Activated T-helper 1 cell treated with anti-CD3 and anti-CD28 coated beads, Interleukin-12 subunit alpha, Interleukin-12 subunit beta, Interleukin-2, Interleukin-4 antibody, amounts not matched to agents 30 ng/mL and 10 ng/mL and 1 ng/mL, durations not matched to agents 14 hours and 24 hours and 36 hours (primary cell): ENCODE measurements at regions of chrX and their contacts with region 1.

Region 1: DNA sequence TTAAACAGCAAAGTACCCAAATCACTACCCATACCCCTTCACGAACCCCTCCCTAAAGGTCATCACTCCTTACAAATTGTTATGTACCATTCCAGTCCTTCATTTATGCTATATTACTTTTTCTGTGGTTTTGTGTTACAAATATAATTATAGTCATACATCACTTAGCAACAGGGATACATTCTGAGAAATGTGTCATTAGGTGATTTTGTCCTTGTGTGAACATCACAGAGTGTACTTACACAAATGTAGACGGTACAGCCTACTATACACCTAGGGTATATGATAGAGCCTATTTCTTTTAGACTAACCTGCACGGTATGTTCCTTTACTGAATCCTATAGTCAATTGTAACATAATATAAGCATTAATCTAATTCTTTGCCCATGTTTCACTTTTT is 61.9 kb downstream of the ASB9 start:
- DNase-seq: no peak
- H3K4me3 Mint-ChIP-seq: no peak overlapping the region
- H3K27ac Mint-ChIP-seq: no peak overlapping the region
- H3K4me1 Mint-ChIP-seq: peaks cover 24% of the 10 kb centered on the region
- H3K27me3 Mint-ChIP-seq: peaks cover 4% of the 10 kb centered on the region

Region 2: GRCh38 chrX:15236146-15236545 is 28.2 kb after region 1 on chrX:
- intact Hi-C with region 1: loop called (anchors 2 kb)
- DNase-seq: no peak
- H3K4me3 Mint-ChIP-seq: no peak overlapping the region
- H3K27ac Mint-ChIP-seq: no peak overlapping the region
- H3K4me1 Mint-ChIP-seq: no peaks in the 10 kb centered on the region
- H3K27me3 Mint-ChIP-seq: no peaks in the 10 kb centered on the region

Region 3: GRCh38 chrX:16670998-16671397 is 1463.0 kb after region 1 on chrX:
- intact Hi-C with region 1: no loop called
- DNase-seq: no peak
- H3K4me3 Mint-ChIP-seq: no peak overlapping the region
- H3K27ac Mint-ChIP-seq: no peak overlapping the region
- H3K4me1 Mint-ChIP-seq: peaks cover 5% of the 10 kb centered on the region
- H3K27me3 Mint-ChIP-seq: no peaks in the 10 kb centered on the region